Posterior cingulate gyrus (tissue), 11 donors: ENCODE measurements at regions of chr14 and their contacts with region 1.

Region 1: DNA sequence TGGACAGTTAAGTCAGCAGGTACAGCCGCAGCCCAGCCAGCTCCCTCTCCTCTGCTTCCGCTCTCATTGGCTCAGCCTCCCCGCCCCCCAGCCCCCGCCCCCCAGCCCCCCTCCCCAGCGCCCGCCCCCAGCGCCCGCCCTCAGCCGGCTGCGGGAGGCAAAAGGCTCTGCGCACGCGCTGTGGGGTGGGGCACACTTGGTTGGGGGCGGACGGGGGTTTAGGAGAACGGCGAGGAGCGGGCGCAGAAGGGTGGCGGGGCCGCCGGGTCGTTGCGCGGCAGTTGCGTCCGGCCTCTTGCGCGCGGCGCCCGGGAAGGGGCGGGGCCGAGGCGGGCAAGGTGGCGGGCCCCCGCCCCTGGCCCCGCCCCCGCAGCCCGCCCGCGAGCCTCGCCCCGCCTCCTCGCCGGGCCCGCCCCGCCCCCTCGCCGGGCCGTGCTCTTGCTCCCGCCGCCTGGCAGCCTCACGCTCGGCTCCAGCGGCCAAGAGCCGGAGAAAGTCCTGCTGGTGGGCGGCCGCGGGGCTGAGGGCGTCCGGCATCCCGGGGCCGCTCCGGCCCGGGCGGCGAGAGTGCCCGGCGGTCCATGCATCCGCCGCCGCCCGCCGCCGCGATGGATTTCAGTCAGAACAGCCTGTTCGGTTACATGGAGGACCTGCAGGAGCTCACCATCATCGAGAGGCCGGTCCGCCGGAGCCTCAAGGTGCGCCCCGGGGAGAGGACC is at the start of gene PPP4R4:
- DNase-seq: peak; percentile 72 to 96 (median 82)

Region 2: GRCh38 chr14:94036313-94037050 is 137.6 kb before region 1 on chr14:
- intact Hi-C with region 1: loop called (anchors 5 kb)
- DNase-seq: peak in 8 of 10 donors; percentile 48 to 93 (median 68)

Region 3: GRCh38 chr14:94080471-94081289 is 93.4 kb before region 1 on chr14 and contains the start of gene DDX24:
- intact Hi-C with region 1: loop called (anchors 5 kb)
- DNase-seq: peak; percentile 94 to 100 (median 98)

Region 4: DNA sequence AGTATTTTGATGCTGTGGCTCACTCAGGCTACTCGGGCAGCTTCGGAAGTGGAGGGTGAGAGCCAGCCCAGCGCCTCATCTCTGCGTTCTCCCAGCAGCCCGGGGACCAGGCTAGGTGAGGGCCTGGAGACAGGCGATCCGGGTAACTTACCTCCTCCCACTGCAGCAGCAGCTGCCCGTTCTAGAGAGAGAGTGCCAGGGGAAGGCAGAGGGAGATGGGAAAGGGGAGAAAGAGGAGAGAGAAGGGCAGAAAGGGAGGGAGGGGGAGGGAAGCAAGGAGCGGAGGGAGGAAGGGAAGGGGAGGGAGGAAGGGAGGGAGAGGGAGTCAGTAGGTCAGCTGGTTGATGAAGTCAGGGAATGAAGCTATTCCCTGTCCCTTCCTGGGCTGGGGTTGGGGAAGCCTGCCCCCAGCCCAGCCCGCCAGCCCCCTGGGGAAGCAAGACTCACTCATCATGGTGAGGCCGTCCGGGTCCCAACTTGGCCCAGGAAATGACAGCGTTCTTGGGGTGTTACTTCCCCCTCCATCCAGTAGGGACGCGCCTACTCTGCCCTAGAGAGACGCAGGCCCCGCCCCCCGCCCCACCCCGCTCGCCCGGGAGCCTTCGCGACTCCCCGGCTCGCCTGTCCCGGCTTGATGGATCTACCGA is 44.8 kb before region 1 on chr14 and contains the start of gene IFI27L2:
- intact Hi-C with region 1: loop called (anchors 2 kb)
- DNase-seq: peak; percentile 57 to 94 (median 72)